GM12878 (cell line): ENCODE measurements at regions of chr12 and their contacts with region 1.

Region 1: DNA sequence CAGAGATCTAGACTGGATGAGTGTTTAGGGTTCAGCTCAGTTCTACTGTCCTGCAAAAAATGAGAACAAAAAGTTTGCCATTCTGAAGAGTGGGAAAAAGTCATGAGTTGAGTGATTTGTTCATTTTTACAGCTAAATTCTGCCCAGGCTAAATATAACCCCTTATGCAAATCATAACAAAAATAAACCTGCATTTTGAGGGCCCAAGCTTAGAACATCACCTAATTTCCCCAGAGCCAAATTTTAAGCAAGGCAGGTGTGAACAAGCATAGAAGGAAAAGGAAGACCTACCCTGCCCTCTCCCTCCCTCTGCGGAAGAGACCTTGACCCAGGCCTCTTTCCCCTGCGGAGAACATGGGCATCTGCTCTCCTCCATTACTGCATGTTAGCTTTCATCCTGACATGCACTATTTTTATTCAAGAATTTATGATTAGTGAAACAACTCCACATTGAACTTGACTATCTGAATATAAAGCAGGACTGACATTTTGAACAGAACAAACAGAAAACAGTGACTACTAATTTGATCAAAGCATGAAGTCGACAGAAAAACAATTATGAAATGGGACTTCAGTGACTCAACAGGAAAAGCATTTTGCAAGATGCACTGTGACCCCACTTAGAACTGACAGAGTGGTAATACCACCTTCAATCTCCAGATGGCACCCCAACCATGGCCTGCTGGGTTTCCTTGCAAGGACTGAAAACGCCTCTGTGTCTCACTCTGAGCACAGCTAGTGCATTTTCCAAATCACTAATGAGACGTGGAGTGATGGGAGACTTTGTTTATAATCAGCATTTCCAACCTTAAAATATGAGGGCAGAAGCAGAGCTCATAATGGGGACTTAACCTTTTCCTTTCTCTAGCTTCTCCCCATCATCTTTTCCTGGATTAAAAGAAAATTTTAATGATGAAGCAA is 30.9 kb upstream of the SELPLG start:
- DNase-seq: peak; percentile 91
- ATAC-seq: peak; percentile 92
- H3K4me3 ChIP-seq: peak overlapping the region; percentile 43
- H3K27ac ChIP-seq: peak overlapping the region; percentile 96
- H3K4me1 ChIP-seq: peaks cover 51% of the 10 kb centered on the region
- H3K27me3 ChIP-seq: no peaks in the 10 kb centered on the region
- CTCF ChIP-seq: peak; percentile 93 to 98 (median 97); a peak in 5 of 6 replicates
- EP300 ChIP-seq: peak; percentile 46 to 71; a peak in 3 of 4 replicates
- POLR2A ChIP-seq: peak; percentile 42; the same call in 1 of the 2 replicates
- RAD21 ChIP-seq: peak; percentile 100

Region 2: DNA sequence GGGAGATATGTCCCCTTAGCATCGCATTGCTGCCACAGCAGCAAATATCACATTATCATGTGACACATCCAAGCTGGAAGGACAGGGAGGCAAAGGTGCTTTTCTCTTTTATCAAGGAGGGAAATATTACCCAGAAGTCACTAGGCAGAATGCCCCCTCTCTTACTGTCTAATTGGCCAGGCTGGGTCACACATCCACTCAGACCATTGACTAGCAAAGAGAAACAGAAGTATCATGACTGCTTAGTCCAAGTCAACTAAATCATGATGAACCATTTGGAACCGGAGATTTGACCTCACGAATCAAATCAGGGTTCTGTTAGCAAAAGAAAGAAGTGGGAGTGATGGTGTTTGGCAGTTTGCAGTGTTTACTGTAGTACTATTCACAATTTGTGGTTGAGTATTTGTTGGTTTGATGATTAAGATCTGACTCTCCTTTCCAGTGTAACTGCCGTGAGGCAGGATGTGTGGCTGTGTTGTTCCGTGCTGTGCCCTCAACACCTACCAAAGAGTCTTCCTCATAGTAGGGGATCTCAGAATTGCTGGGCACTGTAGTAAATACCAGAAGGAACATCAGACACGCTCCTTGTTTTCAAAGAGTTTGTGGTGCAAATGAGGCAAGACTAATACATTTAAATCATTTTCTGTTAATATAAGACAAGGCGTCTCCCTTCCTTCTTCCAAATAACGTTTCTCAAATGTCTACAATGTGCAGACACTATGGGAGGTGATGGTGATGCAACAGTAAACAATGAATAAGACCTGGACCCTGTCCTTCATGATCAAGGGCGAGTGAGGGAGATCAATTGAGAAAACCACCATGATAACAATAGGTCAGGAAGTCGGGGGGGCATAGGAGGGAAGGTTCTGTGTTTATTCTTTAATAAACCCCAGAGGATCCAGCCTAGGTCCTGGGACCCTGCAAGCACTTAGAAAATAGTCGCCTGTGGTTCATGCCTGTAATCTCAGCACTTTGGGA is 1376.9 kb before region 1 on chr12:
- CTCF ChIA-PET with region 1: no interaction called
- POLR2A ChIA-PET with region 1: no interaction called
- RAD21 ChIA-PET with region 1: no interaction called
- SMC1A ChIA-PET with region 1: no interaction called
- in situ Hi-C with region 1: no loop called
- intact Hi-C with region 1: no loop called
- DNase-seq: no peak
- ATAC-seq: no peak
- H3K4me3 ChIP-seq: no peak overlapping the region
- H3K27ac ChIP-seq: no peak overlapping the region
- H3K4me1 ChIP-seq: no peaks in the 10 kb centered on the region
- H3K27me3 ChIP-seq: no peaks in the 10 kb centered on the region; a peak in 1 of 4 replicates
- CTCF ChIP-seq: no peak
- EP300 ChIP-seq: no peak
- POLR2A ChIP-seq: no peak
- RAD21 ChIP-seq: no peak

Region 3: DNA sequence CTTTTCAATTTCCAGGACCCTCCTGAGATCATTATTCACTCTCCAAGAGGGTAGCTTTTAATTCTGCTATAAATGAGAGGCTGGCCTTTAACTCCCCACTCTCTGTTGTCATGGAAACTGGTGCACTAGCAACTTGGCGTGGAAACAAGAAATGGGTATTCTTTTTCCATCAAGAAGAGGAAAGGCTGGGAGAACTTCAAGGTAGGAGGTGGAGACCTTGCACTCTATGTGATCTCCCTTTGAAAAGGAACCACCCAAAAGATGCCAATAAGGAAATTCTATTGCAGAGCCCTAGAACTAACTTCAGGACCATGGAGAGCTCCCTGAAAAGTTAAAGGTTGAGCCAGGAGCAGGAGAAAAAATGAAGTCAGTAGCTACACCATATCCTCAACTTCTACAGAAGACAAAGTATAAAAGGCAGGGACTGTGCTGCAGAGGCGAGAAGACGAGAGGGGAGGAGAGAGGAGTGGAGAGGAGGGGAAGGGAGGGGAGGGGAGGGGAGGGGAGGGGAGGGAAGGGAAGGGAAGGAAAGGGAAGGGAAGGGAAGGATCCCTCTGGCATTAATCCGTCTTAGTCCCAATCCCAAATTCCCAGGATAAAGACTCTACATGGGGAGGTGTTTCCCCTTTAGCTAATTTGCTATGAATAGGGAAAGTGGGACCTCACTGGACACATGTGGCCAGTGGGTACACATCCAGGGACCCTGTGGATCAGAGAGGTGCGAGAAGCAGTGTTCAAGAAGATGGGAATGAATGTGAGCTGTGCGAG is 196.2 kb before region 1 on chr12:
- CTCF ChIA-PET with region 1: no interaction called
- POLR2A ChIA-PET with region 1: no interaction called
- RAD21 ChIA-PET with region 1: no interaction called
- SMC1A ChIA-PET with region 1: no interaction called
- in situ Hi-C with region 1: no loop called
- intact Hi-C with region 1: no loop called
- DNase-seq: no peak
- ATAC-seq: no peak
- H3K4me3 ChIP-seq: no peak overlapping the region
- H3K27ac ChIP-seq: no peak overlapping the region
- H3K4me1 ChIP-seq: no peaks in the 10 kb centered on the region
- H3K27me3 ChIP-seq: no peaks in the 10 kb centered on the region; a peak in 1 of 4 replicates
- CTCF ChIP-seq: no peak
- EP300 ChIP-seq: no peak
- POLR2A ChIP-seq: no peak
- RAD21 ChIP-seq: 0 out of 2 replicates have a peak, but pooled peaks have one; percentile 1

Region 4: GRCh38 chr12:108570743-108571608 is 93.6 kb before region 1 on chr12:
- CTCF ChIA-PET with region 1: interaction called, 171 read pairs
- POLR2A ChIA-PET with region 1: interaction called, 30 read pairs
- RAD21 ChIA-PET with region 1: interaction called, 167 read pairs
- SMC1A ChIA-PET with region 1: interaction called, 150 read pairs
- in situ Hi-C with region 1: no loop called
- intact Hi-C with region 1: no loop called
- DNase-seq: no peak
- ATAC-seq: no peak
- H3K4me3 ChIP-seq: no peak overlapping the region
- H3K27ac ChIP-seq: peak overlapping the region; percentile 100
- H3K4me1 ChIP-seq: peaks cover 89% of the 10 kb centered on the region
- H3K27me3 ChIP-seq: no peaks in the 10 kb centered on the region
- CTCF ChIP-seq: peak; percentile 42 to 53 (median 49); a peak in 4 of 6 replicates
- EP300 ChIP-seq: 0 out of 4 replicates have a peak, but pooled peaks of 1 of the 2 experiments have one; percentile 10
- POLR2A ChIP-seq: no peak
- RAD21 ChIP-seq: peak; percentile 66

Region 5: GRCh38 chr12:108589028-108589839 is 75.4 kb before region 1 on chr12:
- CTCF ChIA-PET with region 1: no interaction called
- POLR2A ChIA-PET with region 1: no interaction called
- RAD21 ChIA-PET with region 1: no interaction called
- SMC1A ChIA-PET with region 1: no interaction called
- in situ Hi-C with region 1: no loop called
- intact Hi-C with region 1: no loop called
- DNase-seq: no peak
- ATAC-seq: peak; percentile 45; the same call in 2 of the 3 replicates
- H3K4me3 ChIP-seq: no peak overlapping the region
- H3K27ac ChIP-seq: no peak overlapping the region
- H3K4me1 ChIP-seq: no peaks in the 10 kb centered on the region; the same call in 1 of the 2 replicates
- H3K27me3 ChIP-seq: no peaks in the 10 kb centered on the region
- CTCF ChIP-seq: no peak
- EP300 ChIP-seq: no peak
- POLR2A ChIP-seq: no peak
- RAD21 ChIP-seq: no peak

Region 6: GRCh38 chr12:108649669-108650068 is 14.9 kb before region 1 on chr12:
- CTCF ChIA-PET with region 1: interaction called, 13 read pairs
- POLR2A ChIA-PET with region 1: interaction called, 5 read pairs
- RAD21 ChIA-PET with region 1: interaction called, 11 read pairs
- SMC1A ChIA-PET with region 1: interaction called, 41 read pairs
- in situ Hi-C with region 1: no loop called
- intact Hi-C with region 1: no loop called
- DNase-seq: no peak
- ATAC-seq: no peak
- H3K4me3 ChIP-seq: no peak overlapping the region
- H3K27ac ChIP-seq: no peak overlapping the region
- H3K4me1 ChIP-seq: no peaks in the 10 kb centered on the region
- H3K27me3 ChIP-seq: no peaks in the 10 kb centered on the region
- CTCF ChIP-seq: no peak
- EP300 ChIP-seq: no peak
- POLR2A ChIP-seq: no peak
- RAD21 ChIP-seq: no peak

Region 7: DNA sequence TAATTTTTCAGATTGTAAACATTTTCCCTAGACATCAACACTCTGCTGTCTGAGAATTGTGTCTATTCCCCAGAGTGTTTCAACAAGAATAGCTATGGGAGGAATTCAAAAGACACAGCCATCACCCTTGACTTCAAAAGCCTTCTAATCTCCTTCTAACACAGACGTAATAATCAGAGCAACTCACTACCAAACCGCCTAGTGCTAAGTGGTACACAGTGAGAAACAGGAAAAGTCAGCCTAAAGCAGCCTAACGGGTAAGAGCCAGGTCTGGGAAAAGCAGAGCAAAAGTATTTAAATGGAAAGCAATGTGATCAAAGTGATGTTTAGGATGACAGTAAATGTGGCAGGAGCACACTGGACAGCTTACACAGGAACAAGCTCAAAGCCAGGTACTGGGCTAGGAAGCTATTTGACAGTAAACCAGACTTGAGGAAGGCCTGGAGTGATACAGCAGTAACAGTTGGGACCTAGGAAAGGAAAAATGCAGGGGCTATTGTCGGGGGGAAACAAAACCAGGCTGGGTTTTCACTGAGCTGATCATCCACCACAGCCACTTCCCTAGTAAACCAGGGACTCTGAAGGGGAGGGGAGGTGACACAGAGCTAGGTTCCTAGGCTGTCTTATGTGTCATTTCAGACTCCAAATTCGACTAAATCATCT is 37.3 kb after region 1 on chr12:
- CTCF ChIA-PET with region 1: interaction called, 7 read pairs
- POLR2A ChIA-PET with region 1: interaction called, 7 read pairs
- RAD21 ChIA-PET with region 1: interaction called, 69 read pairs
- SMC1A ChIA-PET with region 1: interaction called, 24 read pairs
- in situ Hi-C with region 1: no loop called
- intact Hi-C with region 1: no loop called
- DNase-seq: no peak
- ATAC-seq: peak; percentile 70
- H3K4me3 ChIP-seq: no peak overlapping the region
- H3K27ac ChIP-seq: peak overlapping the region; percentile 11; the same call in 1 of the 2 replicates
- H3K4me1 ChIP-seq: peaks cover 20% of the 10 kb centered on the region
- H3K27me3 ChIP-seq: no peaks in the 10 kb centered on the region
- CTCF ChIP-seq: no peak
- EP300 ChIP-seq: no peak
- POLR2A ChIP-seq: no peak
- RAD21 ChIP-seq: no peak

Region 8: GRCh38 chr12:108744021-108744897 is 79.7 kb after region 1 on chr12:
- CTCF ChIA-PET with region 1: no interaction called
- POLR2A ChIA-PET with region 1: interaction called, 3 read pairs
- RAD21 ChIA-PET with region 1: interaction called, 3 read pairs
- SMC1A ChIA-PET with region 1: interaction called, 14 read pairs
- in situ Hi-C with region 1: no loop called
- intact Hi-C with region 1: no loop called
- DNase-seq: no peak
- ATAC-seq: no peak
- H3K4me3 ChIP-seq: no peak overlapping the region
- H3K27ac ChIP-seq: no peak overlapping the region
- H3K4me1 ChIP-seq: no peaks in the 10 kb centered on the region
- H3K27me3 ChIP-seq: no peaks in the 10 kb centered on the region
- CTCF ChIP-seq: no peak
- EP300 ChIP-seq: no peak
- POLR2A ChIP-seq: no peak
- RAD21 ChIP-seq: no peak

Region 9: GRCh38 chr12:108826101-108826806 is 161.7 kb after region 1 on chr12:
- CTCF ChIA-PET with region 1: interaction called, 16 read pairs
- POLR2A ChIA-PET with region 1: interaction called, 8 read pairs
- RAD21 ChIA-PET with region 1: interaction called, 11 read pairs
- SMC1A ChIA-PET with region 1: interaction called, 17 read pairs
- in situ Hi-C with region 1: no loop called
- intact Hi-C with region 1: no loop called
- DNase-seq: no peak
- ATAC-seq: peak; percentile 54
- H3K4me3 ChIP-seq: peak overlapping the region; percentile 21; the same call in 1 of the 2 replicates
- H3K27ac ChIP-seq: peak overlapping the region; percentile 60
- H3K4me1 ChIP-seq: peaks cover 81% of the 10 kb centered on the region
- H3K27me3 ChIP-seq: no peaks in the 10 kb centered on the region
- CTCF ChIP-seq: 0 out of 6 replicates have a peak, but pooled peaks of 1 of the 3 experiments have one; percentile 0
- EP300 ChIP-seq: no peak
- POLR2A ChIP-seq: no peak
- RAD21 ChIP-seq: no peak

Region 10: DNA sequence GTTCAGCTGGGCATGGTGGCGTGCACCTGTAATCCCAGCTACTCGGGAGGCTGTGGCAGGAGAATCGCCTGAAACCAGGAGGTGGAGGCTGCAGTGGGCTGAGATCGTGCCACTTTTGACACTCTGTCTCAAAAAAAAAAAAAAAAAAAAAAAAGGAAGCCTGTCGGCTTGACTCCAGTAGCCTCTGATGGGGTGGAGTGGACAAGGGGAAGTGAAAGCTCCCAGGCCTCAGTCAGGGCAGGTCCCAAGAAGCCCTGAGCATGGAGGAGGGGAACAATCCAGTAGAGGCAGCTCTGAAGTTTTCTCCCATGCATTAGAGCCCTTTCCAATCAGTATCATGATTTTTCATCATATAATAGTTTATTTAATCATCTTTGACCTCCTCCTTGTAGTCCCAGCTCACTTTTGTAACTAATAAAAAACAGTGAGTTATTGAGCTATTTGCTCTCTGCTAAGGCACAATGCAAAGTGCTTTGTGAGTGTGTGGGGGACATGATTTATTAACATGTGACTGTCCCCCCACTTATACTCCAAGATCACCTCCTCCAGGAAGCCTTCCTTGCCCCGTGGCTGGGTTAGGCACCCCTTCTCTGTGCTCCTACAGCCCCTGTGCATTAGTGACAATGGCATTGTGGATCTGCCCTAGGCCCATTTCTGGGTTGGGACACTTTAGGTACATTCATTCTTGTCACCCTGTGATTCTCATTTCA is 197.4 kb after region 1 on chr12:
- CTCF ChIA-PET with region 1: interaction called, 7 read pairs
- POLR2A ChIA-PET with region 1: interaction called, 9 read pairs
- RAD21 ChIA-PET with region 1: interaction called, 18 read pairs
- SMC1A ChIA-PET with region 1: interaction called, 11 read pairs
- in situ Hi-C with region 1: no loop called
- intact Hi-C with region 1: no loop called
- DNase-seq: no peak
- ATAC-seq: peak; percentile 64
- H3K4me3 ChIP-seq: no peak overlapping the region
- H3K27ac ChIP-seq: no peak overlapping the region
- H3K4me1 ChIP-seq: peaks cover 31% of the 10 kb centered on the region
- H3K27me3 ChIP-seq: no peaks in the 10 kb centered on the region
- CTCF ChIP-seq: no peak
- EP300 ChIP-seq: 0 out of 4 replicates have a peak, but pooled peaks of 1 of the 2 experiments have one; percentile 27
- POLR2A ChIP-seq: no peak
- RAD21 ChIP-seq: no peak